GM18951 (cell line): ENCODE measurements at regions of chr7 and their contacts with region 1.

Region 1: DNA sequence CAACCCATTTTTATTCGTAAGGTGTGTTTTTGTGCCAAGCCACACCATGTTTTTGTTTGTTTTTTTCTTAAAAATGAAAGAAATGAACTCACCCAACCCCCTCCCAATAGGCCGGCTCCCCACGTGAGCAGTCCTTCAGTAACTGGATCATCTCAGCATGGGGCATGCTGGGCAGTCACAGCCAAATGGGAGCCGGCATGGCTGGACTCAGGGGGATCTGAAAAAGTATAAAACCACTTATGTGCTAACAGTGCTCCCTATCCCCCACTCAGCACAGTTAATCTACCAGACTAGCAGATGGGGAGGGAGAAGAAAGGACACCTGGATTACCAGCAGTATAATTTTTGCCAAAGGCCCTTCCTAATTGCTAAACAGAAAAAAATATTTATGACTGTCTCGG is 39.3 kb downstream of the BAZ1B start:
- POLR2A ChIP-seq: no peak

Region 2: DNA sequence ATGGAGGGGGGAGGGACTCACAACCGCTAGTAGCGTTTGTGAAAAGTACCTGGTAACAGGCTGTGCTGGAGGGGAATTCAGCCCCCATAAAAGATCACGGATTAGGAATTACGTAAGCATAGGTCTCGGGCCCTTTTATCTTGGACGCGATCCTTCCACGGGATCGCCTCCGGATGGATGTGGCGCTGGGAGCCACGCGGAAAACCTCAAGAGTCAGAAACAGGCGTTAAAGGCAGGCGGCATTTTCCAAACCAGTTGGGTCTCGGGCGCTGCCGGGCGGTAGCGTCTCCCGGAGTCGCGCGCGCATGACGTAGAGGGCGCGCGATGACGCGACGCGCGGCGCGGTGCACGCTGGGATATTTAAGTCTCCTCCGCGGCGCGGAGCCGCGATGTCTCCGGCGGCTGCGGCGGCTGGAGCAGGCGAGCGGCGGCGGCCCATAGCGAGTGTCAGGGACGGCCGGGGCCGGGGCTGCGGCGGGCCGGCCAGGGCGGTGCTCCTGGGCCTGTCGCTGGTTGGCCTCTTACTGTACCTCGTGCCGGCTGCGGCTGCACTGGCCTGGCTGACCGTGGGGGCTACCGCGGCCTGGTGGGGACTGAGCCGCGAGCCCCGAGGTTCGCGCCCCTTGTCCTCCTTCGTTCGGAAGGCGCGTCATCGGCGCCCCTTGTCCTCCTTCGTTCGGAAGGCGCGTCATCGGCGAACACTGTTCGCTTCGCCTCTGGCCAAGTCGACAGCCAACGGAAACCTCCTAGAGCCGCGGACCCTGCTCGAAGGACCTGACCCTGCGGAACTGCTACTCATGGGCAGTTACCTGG is 557.8 kb before region 1 on chr7 and contains the start of gene POM121:
- in situ Hi-C with region 1: loop called (anchors 25 kb)
- POLR2A ChIP-seq: peak; percentile 87

Region 3: DNA sequence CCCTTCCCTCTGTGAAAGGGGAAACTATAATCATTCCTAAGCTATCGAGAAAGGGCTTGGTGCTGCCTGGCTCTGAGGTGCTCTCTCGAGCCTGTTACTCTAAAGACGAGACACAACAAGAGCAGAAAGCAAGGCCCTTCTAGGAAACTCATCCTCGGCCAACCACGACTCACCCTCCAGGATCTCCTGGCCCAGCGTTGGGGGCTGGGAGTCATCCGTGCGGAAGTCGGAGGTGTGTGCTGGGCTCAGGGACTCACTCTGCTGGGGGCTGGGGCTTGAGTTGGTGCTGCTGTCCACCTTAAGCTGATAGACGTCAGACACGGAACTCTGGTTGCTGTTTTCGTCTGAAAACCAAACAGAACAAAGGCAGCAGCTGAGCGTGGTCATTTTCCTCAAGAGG is 57.0 kb after region 1 on chr7:
- in situ Hi-C with region 1: no loop called
- POLR2A ChIP-seq: no peak